ENCODE measurements at regions of chr12 and their contacts with region 1.

Region 1: GRCh38 chr12:111056618-111057521 is 136.5 kb upstream of the MYL2 start:
- DNase-seq: peak; percentile 88
- H3K4me3 Mint-ChIP-seq: no peak overlapping the region
- H3K27ac Mint-ChIP-seq: peak overlapping the region; percentile 97
- H3K4me1 Mint-ChIP-seq: peaks cover 28% of the 10 kb centered on the region
- H3K27me3 Mint-ChIP-seq: no peaks in the 10 kb centered on the region

Region 2: DNA sequence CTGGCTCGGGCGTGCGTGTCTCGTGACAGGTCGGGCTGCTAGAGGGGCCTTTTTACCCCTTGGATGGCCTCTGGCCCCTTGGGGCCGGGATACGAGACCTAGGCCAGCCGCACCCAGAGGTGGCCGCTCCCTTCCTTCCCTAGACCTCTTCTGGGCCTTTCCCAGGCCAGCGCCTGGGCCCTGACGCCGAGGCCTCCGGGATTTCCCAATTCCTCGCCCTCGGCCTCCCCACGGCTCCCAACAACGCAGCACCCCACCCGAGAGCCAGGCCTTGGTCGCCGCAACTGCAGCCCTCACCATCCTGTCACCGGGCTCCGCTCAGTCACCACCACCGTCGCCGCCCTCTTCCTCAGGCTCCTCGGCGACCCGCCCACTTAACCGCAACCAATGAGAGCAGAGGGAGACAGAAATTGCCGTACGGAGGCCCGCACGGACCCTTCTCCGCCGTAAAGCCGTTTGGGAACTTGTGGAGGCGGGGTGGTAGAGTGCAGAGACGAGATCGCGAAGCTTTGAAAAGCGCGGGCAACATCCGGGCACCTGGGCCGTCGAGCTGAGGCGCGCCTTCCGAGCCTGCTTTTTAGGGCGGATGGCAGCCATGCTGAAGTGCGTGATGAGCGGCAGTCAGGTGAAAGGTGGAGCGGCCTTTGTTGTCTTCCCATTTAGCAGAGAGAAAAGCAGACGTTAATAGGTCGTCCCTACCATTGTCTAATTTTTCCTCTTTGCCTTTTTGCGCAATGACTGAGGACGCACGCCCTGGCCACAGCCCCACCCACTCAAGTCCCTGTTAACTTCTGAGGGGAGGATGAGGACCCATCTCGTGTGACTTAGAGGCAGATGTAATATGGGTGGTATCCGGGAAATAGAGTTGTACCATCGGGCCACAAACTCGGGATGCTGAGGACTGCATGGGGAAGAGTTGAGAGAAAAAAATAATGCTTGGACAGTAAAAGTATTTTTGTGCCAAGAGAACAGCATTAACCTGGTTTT is 554.8 kb before region 1 on chr12 and contains the starts of genes RAD9B and VPS29:
- CTCF ChIA-PET with region 1: no interaction called
- intact Hi-C with region 1: loop called (anchors 5 kb)
- DNase-seq: peak; percentile 100
- H3K4me3 Mint-ChIP-seq: peak within 1 kb of the TSS; percentile 94
- H3K27ac Mint-ChIP-seq: peak within 1 kb of the TSS; percentile 96
- H3K4me1 Mint-ChIP-seq: peaks cover 32% of the 10 kb centered on the region
- H3K27me3 Mint-ChIP-seq: no peaks in the 10 kb centered on the region
- total RNA-seq, gene RAD9B: 1.1 to 1.5 TPM
- total RNA-seq, gene VPS29: 76.6 to 81.8 TPM

Region 3: GRCh38 chr12:110583137-110584059 is 473.5 kb before region 1 on chr12 and contains the start of gene PPTC7:
- CTCF ChIA-PET with region 1: no interaction called
- intact Hi-C with region 1: loop called (anchors 10 kb)
- DNase-seq: peak; percentile 99
- H3K4me3 Mint-ChIP-seq: peak within 1 kb of the TSS; percentile 90
- H3K27ac Mint-ChIP-seq: peak within 1 kb of the TSS; percentile 98
- H3K4me1 Mint-ChIP-seq: peaks cover 59% of the 10 kb centered on the region
- H3K27me3 Mint-ChIP-seq: no peaks in the 10 kb centered on the region
- total RNA-seq, gene PPTC7: 41.1 to 43.2 TPM

Region 4: GRCh38 chr12:110896559-110896958 is 160.3 kb before region 1 on chr12:
- CTCF ChIA-PET with region 1: no interaction called
- intact Hi-C with region 1: no loop called
- DNase-seq: no peak
- H3K4me3 Mint-ChIP-seq: no peak overlapping the region
- H3K27ac Mint-ChIP-seq: no peak overlapping the region
- H3K4me1 Mint-ChIP-seq: peaks cover 5% of the 10 kb centered on the region
- H3K27me3 Mint-ChIP-seq: peaks cover 3% of the 10 kb centered on the region

Region 5: DNA sequence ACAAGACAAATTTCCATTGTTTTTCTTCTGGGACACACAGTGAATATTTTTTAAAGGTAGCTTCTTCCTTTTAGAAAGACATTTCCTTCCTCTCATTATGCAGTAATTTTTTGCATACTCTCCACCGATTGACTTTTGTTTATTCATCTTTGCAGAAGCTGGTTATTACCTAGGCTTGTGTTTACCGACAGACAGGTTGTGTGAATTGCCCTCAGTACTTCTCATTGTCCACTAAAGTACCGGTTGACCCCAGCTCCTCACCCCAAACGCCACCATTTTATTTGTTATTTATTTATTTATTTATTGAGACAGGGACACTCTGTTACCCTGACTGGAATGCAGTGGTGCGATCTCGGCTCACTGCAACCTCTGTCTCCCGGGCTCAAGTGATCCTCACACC is 73.1 kb before region 1 on chr12:
- CTCF ChIA-PET with region 1: no interaction called
- intact Hi-C with region 1: no loop called
- DNase-seq: no peak
- H3K4me3 Mint-ChIP-seq: no peak overlapping the region
- H3K27ac Mint-ChIP-seq: no peak overlapping the region
- H3K4me1 Mint-ChIP-seq: no peaks in the 10 kb centered on the region
- H3K27me3 Mint-ChIP-seq: peaks cover 4% of the 10 kb centered on the region

Region 6: GRCh38 chr12:111066744-111067437 is 10.0 kb after region 1 on chr12:
- CTCF ChIA-PET with region 1: no interaction called
- intact Hi-C with region 1: loop called (anchors 1 kb)
- DNase-seq: no peak
- H3K4me3 Mint-ChIP-seq: no peak overlapping the region
- H3K27ac Mint-ChIP-seq: no peak overlapping the region
- H3K4me1 Mint-ChIP-seq: peaks cover 17% of the 10 kb centered on the region
- H3K27me3 Mint-ChIP-seq: no peaks in the 10 kb centered on the region

Region 7: GRCh38 chr12:111093428-111094142 is 36.7 kb after region 1 on chr12:
- CTCF ChIA-PET with region 1: no interaction called
- intact Hi-C with region 1: loop called (anchors 1 kb)
- DNase-seq: peak; percentile 76
- H3K4me3 Mint-ChIP-seq: no peak overlapping the region
- H3K27ac Mint-ChIP-seq: no peak overlapping the region
- H3K4me1 Mint-ChIP-seq: peaks cover 17% of the 10 kb centered on the region
- H3K27me3 Mint-ChIP-seq: no peaks in the 10 kb centered on the region

Measured in activated naive CD4-positive, alpha-beta T cell treated with anti-CD3 and anti-CD28 coated beads for 36 hours (primary cell).